ENCODE measurements at regions of chr11 and their contacts with region 1.

Region 1: DNA sequence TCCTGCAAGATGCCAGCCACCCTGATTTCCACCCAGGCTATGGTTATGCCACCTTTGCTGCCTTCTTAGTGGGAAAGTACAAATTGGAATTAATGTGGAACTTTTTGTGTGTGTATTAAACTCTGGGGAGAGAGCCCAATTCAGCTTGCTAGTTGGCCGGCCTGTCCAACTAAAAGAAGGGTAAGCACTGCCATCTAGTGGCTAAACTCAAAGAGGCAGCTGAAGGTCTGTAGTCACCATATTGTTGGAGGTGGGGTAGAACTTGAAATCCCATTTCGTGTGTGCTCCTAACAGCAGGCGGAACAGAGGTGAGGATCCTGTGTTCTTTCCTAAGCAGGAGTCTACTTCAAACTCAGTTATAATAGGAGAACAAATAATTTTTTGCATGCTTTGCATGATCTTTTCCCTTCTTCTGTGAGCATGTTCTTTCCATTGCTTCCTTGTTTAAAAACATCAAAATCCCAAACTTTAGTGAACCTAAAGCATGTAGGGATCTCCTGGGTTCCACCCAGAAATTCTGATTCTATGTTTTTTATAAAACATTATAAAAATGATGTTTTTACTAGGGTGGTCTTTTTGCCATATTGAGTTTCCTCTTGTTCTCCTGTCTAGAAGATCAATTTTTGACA is 138.8 kb upstream of the SORL1-AS1 start:
- DNase-seq: peak; percentile 86
- ATAC-seq: peak; percentile 46
- H3K4me3 ChIP-seq: no peak overlapping the region
- H3K4me3 Mint-ChIP-seq: peak overlapping the region; percentile 47
- H3K27ac ChIP-seq: no peak overlapping the region
- H3K27ac Mint-ChIP-seq: peak overlapping the region; percentile 68
- H3K4me1 ChIP-seq: peaks cover 31 to 32% of the 10 kb centered on the region in 2 donors
- H3K4me1 Mint-ChIP-seq: peaks cover 35% of the 10 kb centered on the region
- H3K27me3 ChIP-seq: no peaks in the 10 kb centered on the region
- H3K27me3 Mint-ChIP-seq: no peaks in the 10 kb centered on the region
- CTCF ChIP-seq: peak; percentile 88

Region 2: GRCh38 chr11:120511116-120511819 is 1080.3 kb before region 1 on chr11 and contains the start of gene GRIK4:
- CTCF ChIA-PET with region 1: no interaction called
- POLR2A ChIA-PET with region 1: no interaction called
- intact Hi-C with region 1: loop called (anchors 2 kb)
- DNase-seq: peak; percentile 85
- ATAC-seq: peak; percentile 89
- H3K4me3 ChIP-seq: peak within 1 kb of the TSS in 3 of 5 experiments; percentile 25 to 41 (median 30)
- H3K4me3 Mint-ChIP-seq: peak within 1 kb of the TSS; percentile 76
- H3K27ac ChIP-seq: no peak within 1 kb of the TSS
- H3K27ac Mint-ChIP-seq: peak within 1 kb of the TSS; percentile 38
- H3K4me1 ChIP-seq: peaks cover 3 to 7% of the 10 kb centered on the region in 2 donors
- H3K4me1 Mint-ChIP-seq: peaks cover 3% of the 10 kb centered on the region
- H3K27me3 ChIP-seq: peaks cover 0 to 38% (median 10%) of the 10 kb centered on the region in 4 experiments
- H3K27me3 Mint-ChIP-seq: peaks cover 71% of the 10 kb centered on the region
- CTCF ChIP-seq: peak; percentile 88
- total RNA-seq, gene GRIK4: 0.27 TPM in 2 replicates

Region 3: GRCh38 chr11:121249039-121249663 is 342.4 kb before region 1 on chr11:
- CTCF ChIA-PET with region 1: interaction called, 28 read pairs
- POLR2A ChIA-PET with region 1: no interaction called
- intact Hi-C with region 1: loop called (anchors 1 kb)
- DNase-seq: peak; percentile 58
- ATAC-seq: peak; percentile 56
- H3K4me3 ChIP-seq: no peak overlapping the region
- H3K4me3 Mint-ChIP-seq: no peak overlapping the region
- H3K27ac ChIP-seq: no peak overlapping the region
- H3K27ac Mint-ChIP-seq: no peak overlapping the region
- H3K4me1 ChIP-seq: no peaks in the 10 kb centered on the region
- H3K4me1 Mint-ChIP-seq: peaks cover 3% of the 10 kb centered on the region
- H3K27me3 ChIP-seq: peaks cover 0 to 3% (median 0%) of the 10 kb centered on the region in 4 experiments
- H3K27me3 Mint-ChIP-seq: no peaks in the 10 kb centered on the region
- CTCF ChIP-seq: peak; percentile 81

Region 4: GRCh38 chr11:121318848-121319834 is 272.4 kb before region 1 on chr11:
- CTCF ChIA-PET with region 1: interaction called, 28 read pairs
- POLR2A ChIA-PET with region 1: no interaction called
- intact Hi-C with region 1: loop called (anchors 1 kb)
- DNase-seq: peak; percentile 77
- ATAC-seq: peak; percentile 74
- H3K4me3 ChIP-seq: no peak overlapping the region
- H3K4me3 Mint-ChIP-seq: no peak overlapping the region
- H3K27ac ChIP-seq: no peak overlapping the region
- H3K27ac Mint-ChIP-seq: no peak overlapping the region
- H3K4me1 ChIP-seq: peaks cover 11% of the 10 kb centered on the region in 2 donors
- H3K4me1 Mint-ChIP-seq: peaks cover 17% of the 10 kb centered on the region
- H3K27me3 ChIP-seq: no peaks in the 10 kb centered on the region
- H3K27me3 Mint-ChIP-seq: peaks cover 6% of the 10 kb centered on the region
- CTCF ChIP-seq: peak; percentile 76

Region 5: DNA sequence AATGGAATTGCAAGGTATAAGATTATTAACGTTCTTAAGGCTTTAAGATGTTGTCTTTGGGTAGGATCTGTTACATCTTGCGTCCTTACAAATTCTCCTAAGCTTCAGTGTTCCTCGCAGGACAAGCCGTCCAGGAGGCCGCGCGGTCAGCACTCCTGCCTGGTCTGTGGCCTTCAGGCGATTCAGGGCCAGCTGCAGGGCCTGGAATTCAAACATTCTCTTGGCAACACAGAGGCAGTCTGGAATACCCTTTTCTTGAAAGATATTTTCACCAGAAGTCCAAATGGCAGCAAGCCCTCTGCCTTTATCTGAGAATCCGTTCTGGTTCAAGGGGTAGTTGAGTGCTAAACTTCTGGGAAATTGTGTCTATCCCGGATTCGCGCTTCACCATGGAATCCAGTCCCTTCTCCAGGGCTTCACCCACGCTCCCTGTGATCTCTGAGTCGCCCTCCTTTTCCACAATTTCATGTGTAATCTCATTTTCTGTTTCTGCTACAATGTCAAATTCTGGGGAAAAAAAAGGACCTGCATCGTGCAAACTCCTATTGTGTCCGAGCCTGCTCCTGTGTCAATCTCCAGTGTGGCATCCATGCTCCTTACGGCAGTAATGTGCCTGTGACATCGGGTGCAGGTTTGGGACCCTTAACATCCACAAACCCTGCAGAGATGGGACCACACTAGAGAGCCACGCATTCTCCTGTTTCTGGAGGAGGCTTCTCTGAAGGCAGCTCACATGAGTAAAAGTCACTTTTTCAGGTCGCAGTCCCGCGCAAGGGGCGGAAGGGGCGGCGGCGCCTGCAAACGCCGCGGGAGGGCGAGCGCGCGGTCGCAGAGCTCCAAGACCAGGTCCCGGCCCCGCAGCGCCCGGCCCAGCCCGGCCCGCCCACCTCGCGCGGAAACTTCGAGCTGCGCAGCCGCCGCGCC is 164.8 kb before region 1 on chr11:
- CTCF ChIA-PET with region 1: interaction called, 12 read pairs
- POLR2A ChIA-PET with region 1: no interaction called
- intact Hi-C with region 1: no loop called
- DNase-seq: peak; percentile 77
- ATAC-seq: peak; percentile 48
- H3K4me3 ChIP-seq: peak overlapping the region in 4 of 5 experiments; percentile 25 to 54 (median 43)
- H3K4me3 Mint-ChIP-seq: peak overlapping the region; percentile 77
- H3K27ac ChIP-seq: no peak overlapping the region
- H3K27ac Mint-ChIP-seq: peak overlapping the region; percentile 64
- H3K4me1 ChIP-seq: peaks cover 52 to 63% of the 10 kb centered on the region in 2 donors
- H3K4me1 Mint-ChIP-seq: peaks cover 78% of the 10 kb centered on the region
- H3K27me3 ChIP-seq: no peaks in the 10 kb centered on the region
- H3K27me3 Mint-ChIP-seq: no peaks in the 10 kb centered on the region
- CTCF ChIP-seq: peak; percentile 22

Region 6: GRCh38 chr11:121464352-121464946 is 127.1 kb before region 1 on chr11:
- CTCF ChIA-PET with region 1: interaction called, 9 read pairs
- POLR2A ChIA-PET with region 1: no interaction called
- intact Hi-C with region 1: loop called (anchors 5 kb)
- DNase-seq: peak; percentile 36
- ATAC-seq: peak; percentile 31
- H3K4me3 ChIP-seq: no peak overlapping the region
- H3K4me3 Mint-ChIP-seq: peak overlapping the region; percentile 63
- H3K27ac ChIP-seq: peak overlapping the region in 1 of 2 donors; percentile 8
- H3K27ac Mint-ChIP-seq: peak overlapping the region; percentile 62
- H3K4me1 ChIP-seq: peaks cover 65 to 80% of the 10 kb centered on the region in 2 donors
- H3K4me1 Mint-ChIP-seq: peaks cover 90% of the 10 kb centered on the region
- H3K27me3 ChIP-seq: no peaks in the 10 kb centered on the region
- H3K27me3 Mint-ChIP-seq: no peaks in the 10 kb centered on the region
- CTCF ChIP-seq: no peak

Region 7: DNA sequence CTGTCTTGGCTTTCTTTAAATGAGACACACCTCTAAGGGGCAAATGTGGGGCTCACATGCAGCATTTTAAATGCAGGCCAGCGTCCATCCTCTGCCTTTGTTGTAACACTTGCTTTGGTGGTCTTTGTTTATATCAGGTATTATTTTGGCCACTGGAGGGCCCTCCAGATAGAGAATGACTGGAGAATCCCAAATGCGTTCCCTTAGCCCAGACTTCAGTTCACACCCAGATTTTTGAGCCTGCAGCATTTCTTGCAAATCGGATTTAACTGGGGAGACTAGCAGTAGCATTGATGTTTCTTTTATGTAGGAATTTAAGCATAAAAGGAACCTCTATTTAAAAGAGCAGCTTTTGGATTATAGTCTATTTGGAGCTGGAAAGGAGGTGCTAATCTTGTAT is 61.5 kb after region 1 on chr11:
- CTCF ChIA-PET with region 1: no interaction called
- POLR2A ChIA-PET with region 1: no interaction called
- intact Hi-C with region 1: no loop called
- DNase-seq: no peak
- ATAC-seq: no peak
- H3K4me3 ChIP-seq: no peak overlapping the region
- H3K4me3 Mint-ChIP-seq: no peak overlapping the region
- H3K27ac ChIP-seq: no peak overlapping the region
- H3K27ac Mint-ChIP-seq: no peak overlapping the region
- H3K4me1 ChIP-seq: peaks cover 6 to 10% of the 10 kb centered on the region in 2 donors
- H3K4me1 Mint-ChIP-seq: peaks cover 8% of the 10 kb centered on the region
- H3K27me3 ChIP-seq: peaks cover 0 to 8% (median 4%) of the 10 kb centered on the region in 4 experiments
- H3K27me3 Mint-ChIP-seq: peaks cover 21% of the 10 kb centered on the region
- CTCF ChIP-seq: no peak

Region 8: DNA sequence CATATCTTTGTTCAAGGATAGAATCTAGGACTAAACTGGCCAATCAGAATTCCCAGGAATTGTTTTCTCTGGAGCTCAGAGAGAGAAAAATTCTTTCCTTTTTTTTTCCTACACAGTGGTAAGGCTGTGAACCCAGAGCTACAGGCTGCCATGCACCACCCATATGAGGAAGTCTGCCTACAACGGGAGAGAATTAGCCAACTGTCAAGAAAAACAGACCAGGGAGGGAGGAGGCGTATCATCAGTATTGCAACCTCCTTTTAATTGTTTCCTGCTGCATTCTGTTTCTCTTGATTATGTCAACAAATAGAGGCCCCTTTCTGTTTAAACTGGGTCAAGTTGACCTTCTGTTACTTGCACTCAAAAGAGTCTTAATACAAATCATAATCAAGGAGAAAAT is 887.5 kb after region 1 on chr11:
- CTCF ChIA-PET with region 1: no interaction called
- POLR2A ChIA-PET with region 1: no interaction called
- intact Hi-C with region 1: no loop called
- DNase-seq: no peak
- ATAC-seq: no peak
- H3K4me3 ChIP-seq: no peak overlapping the region
- H3K4me3 Mint-ChIP-seq: no peak overlapping the region
- H3K27ac ChIP-seq: no peak overlapping the region
- H3K27ac Mint-ChIP-seq: no peak overlapping the region
- H3K4me1 ChIP-seq: no peaks in the 10 kb centered on the region
- H3K4me1 Mint-ChIP-seq: no peaks in the 10 kb centered on the region
- H3K27me3 ChIP-seq: peaks cover 0 to 2% (median 0%) of the 10 kb centered on the region in 4 experiments
- H3K27me3 Mint-ChIP-seq: peaks cover 14% of the 10 kb centered on the region
- CTCF ChIP-seq: no peak

Measured in B cell (primary cell).